Naive thymus-derived CD4-positive, alpha-beta T cell (primary cell): ENCODE measurements at regions of chr2 and their contacts with region 1.

Region 1: DNA sequence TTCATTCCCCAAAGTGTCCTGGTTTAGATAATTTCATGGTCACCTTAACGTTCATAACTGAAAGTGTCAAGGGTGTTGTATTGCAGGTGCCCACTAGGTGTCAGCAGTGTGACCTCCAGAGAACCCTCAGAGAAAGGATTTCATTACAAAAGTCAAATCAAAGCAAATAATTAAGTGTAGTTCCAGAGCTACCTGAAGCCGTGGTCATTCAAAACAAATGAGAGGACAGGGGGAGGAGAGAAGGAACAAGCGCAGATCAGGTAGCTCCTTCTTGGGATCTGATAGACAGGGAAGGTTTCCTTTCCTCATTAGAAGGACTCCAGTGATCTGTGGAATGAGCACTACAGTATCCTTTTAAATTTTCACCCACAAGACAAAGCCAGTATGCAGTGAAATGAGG is at the start of gene SLC9A4:
- DNase-seq: peak in 6 of 9 donors; percentile 27 to 45 (median 36)
- ATAC-seq: peak; percentile 60
- H3K4me3 ChIP-seq: no peak within 1 kb of the TSS
- H3K4me3 Mint-ChIP-seq: no peak within 1 kb of the TSS
- H3K27ac ChIP-seq: no peak within 1 kb of the TSS
- H3K27ac Mint-ChIP-seq: no peak within 1 kb of the TSS
- H3K4me1 ChIP-seq: no peaks in the 10 kb centered on the region
- H3K4me1 Mint-ChIP-seq: no peaks in the 10 kb centered on the region
- H3K27me3 ChIP-seq: no peaks in the 10 kb centered on the region
- H3K27me3 Mint-ChIP-seq: peaks cover 16 to 55% (median 34%) of the 10 kb centered on the region in 5 donors
- total RNA-seq, gene SLC9A4: 0.05 to 0.15 (median 0.08) TPM

Region 2: DNA sequence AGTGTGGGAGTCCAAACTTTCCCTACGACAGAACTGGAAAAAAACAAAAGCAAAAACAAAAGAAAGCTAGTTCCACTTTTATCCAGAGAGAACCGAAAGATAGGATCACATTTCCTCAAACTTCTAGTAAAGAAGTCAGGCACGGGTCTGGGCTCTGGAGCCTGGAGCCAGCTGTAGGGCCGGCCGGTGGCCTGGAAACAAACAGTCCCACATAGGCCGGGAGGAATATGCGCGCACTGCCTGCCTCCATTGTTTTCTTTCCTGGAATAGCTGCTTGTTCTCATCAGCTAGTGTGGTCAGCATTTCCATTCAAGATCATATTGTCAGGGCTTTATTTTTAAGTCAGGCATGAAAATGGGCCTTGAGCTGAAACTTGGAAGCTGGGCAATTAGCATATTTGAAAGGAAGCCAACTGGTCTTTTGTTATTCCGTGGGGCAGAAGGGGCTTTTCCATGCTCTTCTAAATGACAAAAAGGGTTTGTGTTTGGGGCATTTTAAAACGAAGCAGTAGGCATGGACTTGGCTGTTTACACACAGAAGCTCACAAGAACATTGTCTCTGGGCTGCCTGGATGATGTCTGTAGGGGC is 939.4 kb before region 1 on chr2:
- CTCF ChIA-PET with region 1: no interaction called
- POLR2A ChIA-PET with region 1: no interaction called
- intact Hi-C with region 1: no loop called
- DNase-seq: no peak
- ATAC-seq: no peak
- H3K4me3 ChIP-seq: no peak overlapping the region
- H3K4me3 Mint-ChIP-seq: no peak overlapping the region
- H3K27ac ChIP-seq: no peak overlapping the region
- H3K27ac Mint-ChIP-seq: no peak overlapping the region
- H3K4me1 ChIP-seq: no peaks in the 10 kb centered on the region
- H3K4me1 Mint-ChIP-seq: no peaks in the 10 kb centered on the region
- H3K27me3 ChIP-seq: no peaks in the 10 kb centered on the region
- H3K27me3 Mint-ChIP-seq: no peaks in the 10 kb centered on the region

Region 3: DNA sequence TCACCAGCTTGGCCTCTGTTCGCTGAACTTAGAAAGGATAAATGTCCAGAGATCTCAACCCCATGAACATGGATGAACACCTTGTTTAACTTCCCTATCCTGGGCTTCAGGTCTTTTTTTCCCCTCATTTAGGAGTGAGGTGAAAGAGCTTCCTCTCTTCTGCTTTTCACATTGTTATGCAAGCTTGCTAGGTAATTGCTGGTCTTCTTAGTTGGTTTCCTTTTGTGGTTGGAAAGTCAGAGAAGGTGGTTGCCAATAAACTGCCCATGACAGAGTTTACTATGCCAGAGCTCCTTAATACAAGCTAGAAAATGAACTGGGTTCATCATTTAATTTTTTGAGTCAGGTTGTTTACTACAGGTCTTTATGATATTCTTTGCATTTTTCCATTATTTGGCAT is 16.6 kb after region 1 on chr2:
- CTCF ChIA-PET with region 1: interaction called, 12 read pairs
- POLR2A ChIA-PET with region 1: no interaction called
- intact Hi-C with region 1: no loop called
- DNase-seq: no peak
- ATAC-seq: no peak
- H3K4me3 ChIP-seq: no peak overlapping the region
- H3K4me3 Mint-ChIP-seq: no peak overlapping the region
- H3K27ac ChIP-seq: no peak overlapping the region
- H3K27ac Mint-ChIP-seq: no peak overlapping the region
- H3K4me1 ChIP-seq: no peaks in the 10 kb centered on the region
- H3K4me1 Mint-ChIP-seq: peaks cover 0 to 11% (median 0%) of the 10 kb centered on the region in 7 donors
- H3K27me3 ChIP-seq: no peaks in the 10 kb centered on the region
- H3K27me3 Mint-ChIP-seq: peaks cover 18 to 37% (median 27%) of the 10 kb centered on the region in 5 donors

Region 4: GRCh38 chr2:102558463-102558862 is 85.4 kb after region 1 on chr2:
- CTCF ChIA-PET with region 1: no interaction called
- POLR2A ChIA-PET with region 1: no interaction called
- intact Hi-C with region 1: no loop called
- DNase-seq: no peak
- ATAC-seq: no peak
- H3K4me3 ChIP-seq: no peak overlapping the region
- H3K4me3 Mint-ChIP-seq: no peak overlapping the region
- H3K27ac ChIP-seq: no peak overlapping the region
- H3K27ac Mint-ChIP-seq: no peak overlapping the region
- H3K4me1 ChIP-seq: no peaks in the 10 kb centered on the region
- H3K4me1 Mint-ChIP-seq: no peaks in the 10 kb centered on the region
- H3K27me3 ChIP-seq: no peaks in the 10 kb centered on the region
- H3K27me3 Mint-ChIP-seq: peaks cover 0 to 3% (median 0%) of the 10 kb centered on the region in 5 donors

Region 5: DNA sequence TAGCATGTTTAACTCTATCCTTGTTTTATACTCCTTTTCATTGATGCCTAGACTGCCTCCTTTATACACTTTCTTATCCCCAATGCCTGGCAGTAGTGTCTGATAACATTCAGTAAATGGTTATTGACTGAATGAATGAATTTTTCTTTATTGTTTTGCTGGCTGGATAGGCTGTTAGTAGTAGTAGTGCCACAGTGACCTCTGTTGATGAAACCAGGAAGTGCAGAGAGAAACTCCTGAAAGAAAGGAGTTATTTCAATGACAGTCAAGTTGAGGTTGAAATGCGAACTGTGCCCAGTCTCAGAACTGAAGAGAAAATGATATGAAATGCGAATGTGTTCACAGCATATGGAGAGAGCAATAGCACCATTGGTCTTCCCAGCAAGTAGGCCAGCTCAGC is 119.6 kb after region 1 on chr2:
- CTCF ChIA-PET with region 1: no interaction called
- POLR2A ChIA-PET with region 1: no interaction called
- intact Hi-C with region 1: loop called in 1 of 2 experiments (anchors 2 kb)
- DNase-seq: no peak
- ATAC-seq: no peak
- H3K4me3 ChIP-seq: no peak overlapping the region
- H3K4me3 Mint-ChIP-seq: no peak overlapping the region
- H3K27ac ChIP-seq: no peak overlapping the region
- H3K27ac Mint-ChIP-seq: no peak overlapping the region
- H3K4me1 ChIP-seq: no peaks in the 10 kb centered on the region
- H3K4me1 Mint-ChIP-seq: no peaks in the 10 kb centered on the region
- H3K27me3 ChIP-seq: no peaks in the 10 kb centered on the region
- H3K27me3 Mint-ChIP-seq: peaks cover 8 to 34% (median 26%) of the 10 kb centered on the region in 5 donors

Region 6: DNA sequence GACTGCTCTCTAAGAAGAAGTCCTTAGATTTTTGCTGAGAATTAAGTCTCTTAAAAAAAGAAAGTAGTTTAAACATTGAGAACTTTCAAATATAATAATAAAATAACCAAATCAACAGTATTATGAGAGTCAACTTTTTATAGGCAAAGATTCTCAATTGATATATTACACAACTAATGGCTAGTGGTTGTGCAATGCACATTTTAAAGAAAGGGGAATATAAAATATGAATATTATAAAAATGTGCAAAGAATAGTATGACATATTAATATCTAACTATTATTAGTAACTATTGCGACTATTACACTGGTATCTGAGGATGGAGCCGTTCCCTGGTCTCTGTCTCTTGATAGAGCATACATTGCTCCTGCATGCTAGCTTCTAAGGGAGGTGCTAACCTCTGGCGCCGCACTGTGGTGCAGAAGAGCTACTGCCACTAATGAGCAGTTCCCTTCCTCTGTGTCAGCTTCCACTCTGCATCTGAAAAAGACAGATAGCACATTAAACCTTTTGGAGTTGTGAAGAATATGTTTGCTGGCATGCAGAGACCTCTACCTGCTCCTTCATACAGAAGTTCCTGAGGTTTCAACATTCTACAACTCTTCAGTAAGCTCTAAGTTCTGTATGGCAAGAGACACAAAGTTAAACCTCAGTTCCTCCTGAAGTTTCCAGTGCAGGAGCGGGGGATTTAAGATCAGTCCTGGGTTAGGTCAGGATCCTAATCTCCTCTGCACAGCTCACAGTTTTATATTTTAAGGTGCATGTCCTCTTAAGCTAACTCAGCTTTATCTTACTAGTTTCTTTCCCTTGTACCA is 142.8 kb after region 1 on chr2:
- CTCF ChIA-PET with region 1: interaction called, 3 read pairs
- POLR2A ChIA-PET with region 1: no interaction called
- intact Hi-C with region 1: loop called (anchors 1 kb)
- DNase-seq: peak in 5 of 9 donors; percentile 10 to 41 (median 13)
- ATAC-seq: peak; percentile 86
- H3K4me3 ChIP-seq: no peak overlapping the region
- H3K4me3 Mint-ChIP-seq: no peak overlapping the region
- H3K27ac ChIP-seq: no peak overlapping the region
- H3K27ac Mint-ChIP-seq: no peak overlapping the region
- H3K4me1 ChIP-seq: no peaks in the 10 kb centered on the region
- H3K4me1 Mint-ChIP-seq: peaks cover 5 to 17% (median 13%) of the 10 kb centered on the region in 7 donors
- H3K27me3 ChIP-seq: peaks cover 0 to 5% of the 10 kb centered on the region in 2 donors
- H3K27me3 Mint-ChIP-seq: peaks cover 39 to 62% (median 57%) of the 10 kb centered on the region in 5 donors

Region 7: DNA sequence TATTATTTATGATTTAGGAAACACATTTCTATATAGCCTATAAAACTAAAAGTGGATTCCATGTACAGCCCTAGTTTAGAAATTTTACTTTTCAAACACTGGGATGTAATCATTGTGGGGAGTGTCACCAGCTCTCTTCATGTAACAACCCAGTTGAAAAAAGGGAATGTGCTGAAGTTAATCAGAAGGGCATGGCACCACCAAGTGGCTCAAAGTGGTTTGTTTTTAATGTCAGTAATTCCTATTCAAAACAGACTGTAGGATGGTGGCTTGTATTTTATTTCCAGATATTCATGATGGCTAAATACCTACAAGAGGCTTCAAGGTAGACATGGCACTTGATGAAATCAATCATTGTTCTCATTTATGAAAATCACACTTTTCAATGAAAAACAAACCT is 230.7 kb after region 1 on chr2:
- CTCF ChIA-PET with region 1: interaction called, 7 read pairs
- POLR2A ChIA-PET with region 1: no interaction called
- intact Hi-C with region 1: loop called in 1 of 2 experiments (anchors 5 kb)
- DNase-seq: peak in 3 of 9 donors; percentile 11 to 15 (median 11)
- ATAC-seq: no peak
- H3K4me3 ChIP-seq: no peak overlapping the region
- H3K4me3 Mint-ChIP-seq: no peak overlapping the region
- H3K27ac ChIP-seq: no peak overlapping the region
- H3K27ac Mint-ChIP-seq: no peak overlapping the region
- H3K4me1 ChIP-seq: no peaks in the 10 kb centered on the region
- H3K4me1 Mint-ChIP-seq: no peaks in the 10 kb centered on the region
- H3K27me3 ChIP-seq: no peaks in the 10 kb centered on the region
- H3K27me3 Mint-ChIP-seq: peaks cover 5 to 21% (median 9%) of the 10 kb centered on the region in 5 donors

Region 8: GRCh38 chr2:102806250-102806837 is 333.3 kb after region 1 on chr2:
- CTCF ChIA-PET with region 1: no interaction called
- POLR2A ChIA-PET with region 1: no interaction called
- intact Hi-C with region 1: loop called (anchors 2 kb)
- DNase-seq: peak in 5 of 9 donors; percentile 5 to 41 (median 14)
- ATAC-seq: peak; percentile 63
- H3K4me3 ChIP-seq: no peak overlapping the region
- H3K4me3 Mint-ChIP-seq: no peak overlapping the region
- H3K27ac ChIP-seq: no peak overlapping the region
- H3K27ac Mint-ChIP-seq: no peak overlapping the region
- H3K4me1 ChIP-seq: peaks cover 7 to 8% of the 10 kb centered on the region in 2 donors
- H3K4me1 Mint-ChIP-seq: peaks cover 9 to 23% (median 20%) of the 10 kb centered on the region in 7 donors
- H3K27me3 ChIP-seq: no peaks in the 10 kb centered on the region
- H3K27me3 Mint-ChIP-seq: peaks cover 0 to 8% (median 0%) of the 10 kb centered on the region in 5 donors